A549 (cell line): ENCODE measurements at regions of chr11 and their contacts with region 1.

Region 1: DNA sequence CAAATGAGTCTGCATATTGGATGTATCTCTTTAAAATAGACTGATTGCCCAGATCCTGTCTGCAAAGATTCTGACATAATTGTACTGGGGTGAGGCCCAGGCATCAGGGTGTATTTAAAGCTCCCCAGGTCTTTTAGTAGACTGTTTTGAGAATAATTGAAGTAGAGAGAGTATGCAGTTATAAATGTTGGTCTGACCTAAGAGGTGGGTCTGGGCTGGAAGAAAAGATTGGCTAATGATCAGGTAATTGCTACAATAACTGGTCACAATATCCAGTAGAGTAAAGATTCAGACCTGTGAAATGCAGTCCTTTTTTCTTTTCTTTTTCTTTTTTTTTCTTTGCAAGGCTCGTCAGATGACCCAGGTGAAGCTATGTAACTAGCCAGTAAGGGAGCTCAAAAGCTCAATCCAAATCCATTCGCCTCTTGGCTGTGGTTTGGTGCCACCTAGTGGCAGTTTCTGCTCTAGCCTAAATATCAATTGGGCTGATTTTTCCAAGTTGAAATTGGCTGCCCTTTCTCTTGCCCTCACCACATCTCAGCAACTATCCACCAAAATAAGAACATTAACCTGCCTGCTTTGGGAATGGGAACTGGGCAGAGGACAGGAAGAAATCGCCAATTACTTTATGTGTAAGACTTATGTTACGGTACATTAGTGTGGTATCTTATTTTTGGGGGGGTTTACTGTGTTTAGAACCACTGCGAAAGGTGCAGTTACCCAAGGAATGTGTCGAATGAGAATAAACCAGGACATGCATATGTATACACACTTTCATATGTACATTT is 45.9 kb downstream of the ZNF143 start:
- DNase-seq: peak; percentile 55 to 81
- ATAC-seq: peak; percentile 94 to 96
- H3K4me3 ChIP-seq: no peak overlapping the region
- H3K27ac ChIP-seq: no peak overlapping the region
- H3K4me1 ChIP-seq: peaks cover 29% of the 10 kb centered on the region
- CTCF ChIP-seq: peak; percentile 97
- EP300 ChIP-seq: no peak
- POLR2A ChIP-seq: no peak
- RAD21 ChIP-seq: peak; percentile 92 to 96

Region 2: GRCh38 chr11:9158898-9159391 is 347.7 kb before region 1 on chr11:
- CTCF ChIA-PET with region 1: interaction called, 21 read pairs
- POLR2A ChIA-PET with region 1: interaction called, 5 read pairs
- DNase-seq: no peak
- ATAC-seq: no peak
- H3K4me3 ChIP-seq: no peak overlapping the region
- H3K27ac ChIP-seq: no peak overlapping the region
- H3K4me1 ChIP-seq: no peaks in the 10 kb centered on the region
- CTCF ChIP-seq: no peak
- EP300 ChIP-seq: no peak
- POLR2A ChIP-seq: no peak
- RAD21 ChIP-seq: no peak

Region 3: DNA sequence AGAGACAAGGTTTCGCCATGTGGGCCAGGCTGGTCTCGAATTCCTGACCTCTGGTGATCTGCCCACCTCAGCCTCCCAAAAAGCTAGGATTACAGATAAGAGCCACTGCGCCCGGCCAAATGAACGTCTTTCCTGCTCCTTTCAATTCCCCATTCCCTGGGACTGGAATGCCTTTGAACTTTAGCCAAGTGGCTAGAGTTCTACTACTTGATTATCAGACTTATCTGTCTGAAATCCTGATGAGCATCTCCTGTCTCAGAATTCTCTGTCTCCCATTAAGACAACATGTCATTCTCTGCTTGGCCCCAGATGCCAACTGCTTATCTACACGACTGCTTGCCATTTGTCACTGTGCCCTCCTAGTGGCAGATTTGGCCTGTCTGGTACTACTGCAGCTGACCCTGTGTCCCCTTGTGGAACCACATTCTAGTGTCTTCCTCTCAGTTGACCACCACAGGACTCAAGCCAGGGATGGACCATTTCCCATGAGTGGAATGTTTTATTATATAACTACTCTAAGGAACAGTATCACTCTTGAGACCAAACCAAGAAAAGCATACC is 155.3 kb before region 1 on chr11:
- CTCF ChIA-PET with region 1: no interaction called
- POLR2A ChIA-PET with region 1: no interaction called
- DNase-seq: no peak
- ATAC-seq: peak; percentile 34 to 48; a peak in 3 of 6 replicates
- H3K4me3 ChIP-seq: no peak overlapping the region
- H3K27ac ChIP-seq: 0 out of 6 replicates have a peak overlapping the region, but pooled peaks of 1 of the 2 experiments have one; percentile 15
- H3K4me1 ChIP-seq: no peaks in the 10 kb centered on the region
- CTCF ChIP-seq: no peak
- EP300 ChIP-seq: no peak
- POLR2A ChIP-seq: no peak
- RAD21 ChIP-seq: no peak

Region 4: DNA sequence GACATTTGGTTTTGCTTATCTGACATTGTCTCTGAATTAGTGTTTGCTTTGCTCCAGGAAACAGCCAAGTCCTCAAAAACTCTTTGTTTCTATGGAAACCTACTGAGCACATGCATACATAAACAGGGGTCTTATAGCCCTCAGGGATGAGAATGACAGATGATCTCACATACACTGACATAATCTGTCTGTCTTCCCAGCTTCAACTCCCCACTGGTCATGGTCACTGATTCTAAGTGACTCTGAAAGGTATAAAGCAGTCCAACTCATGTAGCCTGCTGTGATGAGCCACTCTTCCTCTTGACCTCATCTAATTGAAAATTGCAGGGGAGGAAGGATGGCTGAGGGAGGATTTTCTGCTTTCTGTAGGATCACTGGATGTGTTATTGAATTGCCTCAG is 33.3 kb before region 1 on chr11:
- CTCF ChIA-PET with region 1: interaction called, 16 read pairs
- POLR2A ChIA-PET with region 1: no interaction called
- DNase-seq: no peak
- ATAC-seq: no peak
- H3K4me3 ChIP-seq: no peak overlapping the region
- H3K27ac ChIP-seq: no peak overlapping the region
- H3K4me1 ChIP-seq: no peaks in the 10 kb centered on the region
- CTCF ChIP-seq: no peak
- EP300 ChIP-seq: no peak
- POLR2A ChIP-seq: no peak
- RAD21 ChIP-seq: no peak

Region 5: GRCh38 chr11:9527481-9528140 is 20.9 kb after region 1 on chr11:
- CTCF ChIA-PET with region 1: interaction called, 15 read pairs
- POLR2A ChIA-PET with region 1: no interaction called
- DNase-seq: peak in 1 of 2 experiments; percentile 39
- ATAC-seq: peak; percentile 54 to 60; a peak in 4 of 6 replicates
- H3K4me3 ChIP-seq: no peak overlapping the region
- H3K27ac ChIP-seq: peak overlapping the region; percentile 69 to 81
- H3K4me1 ChIP-seq: peaks cover 42% of the 10 kb centered on the region
- CTCF ChIP-seq: no peak
- EP300 ChIP-seq: no peak
- POLR2A ChIP-seq: no peak
- RAD21 ChIP-seq: no peak

Region 6: GRCh38 chr11:9550191-9550628 is 43.5 kb after region 1 on chr11:
- CTCF ChIA-PET with region 1: interaction called, 16 read pairs
- POLR2A ChIA-PET with region 1: no interaction called
- DNase-seq: no peak
- ATAC-seq: no peak
- H3K4me3 ChIP-seq: no peak overlapping the region
- H3K27ac ChIP-seq: no peak overlapping the region
- H3K4me1 ChIP-seq: no peaks in the 10 kb centered on the region
- CTCF ChIP-seq: no peak
- EP300 ChIP-seq: no peak
- POLR2A ChIP-seq: no peak
- RAD21 ChIP-seq: no peak